Left ventricle myocardium superior (tissue), 1 donor: ENCODE measurements at regions of chr4 and their contacts with region 1.

Region 1: GRCh38 chr4:139603576-139604387 is 47.8 kb upstream of the SETD7 start:
- DNase-seq: no peak
- ATAC-seq: peak; percentile 63

Region 2: GRCh38 chr4:139540632-139541031 is 63.1 kb before region 1 on chr4:
- intact Hi-C with region 1: no loop called
- DNase-seq: no peak
- ATAC-seq: peak; percentile 27

Region 3: DNA sequence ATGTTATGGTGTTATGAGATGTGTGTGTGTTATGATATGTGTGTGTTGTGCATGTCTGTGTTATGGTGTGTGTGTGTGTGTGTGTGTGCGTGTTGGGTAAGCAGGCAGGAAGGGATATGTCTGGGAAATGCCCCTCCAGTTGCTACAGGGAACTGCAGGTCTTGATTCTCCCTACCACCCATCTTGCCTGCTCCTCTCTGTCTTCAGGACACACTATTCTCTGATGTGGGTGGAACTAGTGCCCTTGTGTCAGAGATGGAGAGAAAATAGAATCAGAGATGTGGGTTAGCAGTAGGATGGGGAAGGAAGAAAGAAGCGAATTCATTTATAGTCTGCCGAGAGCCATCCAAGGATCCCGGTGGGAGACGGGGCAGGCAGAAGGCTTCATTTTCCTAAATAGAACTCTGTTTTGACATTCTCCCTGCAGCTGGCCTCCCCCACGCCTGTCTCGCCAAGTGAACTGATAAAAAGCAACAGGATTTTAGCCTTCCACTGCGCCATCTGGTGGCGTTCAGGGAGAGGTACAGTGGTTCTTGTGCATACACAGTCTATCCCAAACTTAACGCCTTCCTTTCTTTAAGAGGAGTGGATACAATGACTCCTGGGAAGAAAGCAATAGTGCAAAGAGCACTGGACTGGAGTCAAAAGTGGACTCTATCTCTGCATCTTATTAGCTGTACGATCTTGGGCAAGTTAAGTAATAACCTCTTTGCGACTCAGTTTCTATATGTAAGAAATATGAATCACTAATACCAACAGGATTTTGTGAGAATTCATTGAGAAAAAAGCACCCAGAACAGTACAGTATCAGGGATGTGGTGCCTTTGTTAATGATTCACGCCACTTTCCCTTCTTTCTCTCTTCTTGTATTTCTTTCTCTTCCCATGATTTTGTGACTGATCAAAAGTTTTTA is 47.8 kb after region 1 on chr4:
- intact Hi-C with region 1: loop called (anchors 5 kb)
- DNase-seq: peak; percentile 84
- ATAC-seq: peak; percentile 90